Heart right ventricle (tissue), 16 donors: ENCODE measurements at regions of chr3 and their contacts with region 1.

Region 1: GRCh38 chr3:153658136-153658535 is 463.1 kb upstream of the ARHGEF26 start:
- DNase-seq: no peak
- ATAC-seq: peak in 1 of 8 donors; percentile 77
- H3K4me3 ChIP-seq: no peak overlapping the region
- H3K27ac ChIP-seq: no peak overlapping the region
- H3K4me1 ChIP-seq: no peaks in the 10 kb centered on the region
- H3K27me3 ChIP-seq: no peaks in the 10 kb centered on the region
- CTCF ChIP-seq: no peak

Region 2: GRCh38 chr3:153640689-153641301 is 17.3 kb before region 1 on chr3:
- intact Hi-C with region 1: loop called in 1 of 10 experiments (anchors 1 kb)
- DNase-seq: no peak
- ATAC-seq: no peak
- H3K4me3 ChIP-seq: no peak overlapping the region
- H3K27ac ChIP-seq: no peak overlapping the region
- H3K4me1 ChIP-seq: no peaks in the 10 kb centered on the region
- H3K27me3 ChIP-seq: no peaks in the 10 kb centered on the region
- CTCF ChIP-seq: no peak